Psoas muscle (tissue), 8 donors: ENCODE measurements at regions of chr19 and their contacts with region 1.

Region 1: DNA sequence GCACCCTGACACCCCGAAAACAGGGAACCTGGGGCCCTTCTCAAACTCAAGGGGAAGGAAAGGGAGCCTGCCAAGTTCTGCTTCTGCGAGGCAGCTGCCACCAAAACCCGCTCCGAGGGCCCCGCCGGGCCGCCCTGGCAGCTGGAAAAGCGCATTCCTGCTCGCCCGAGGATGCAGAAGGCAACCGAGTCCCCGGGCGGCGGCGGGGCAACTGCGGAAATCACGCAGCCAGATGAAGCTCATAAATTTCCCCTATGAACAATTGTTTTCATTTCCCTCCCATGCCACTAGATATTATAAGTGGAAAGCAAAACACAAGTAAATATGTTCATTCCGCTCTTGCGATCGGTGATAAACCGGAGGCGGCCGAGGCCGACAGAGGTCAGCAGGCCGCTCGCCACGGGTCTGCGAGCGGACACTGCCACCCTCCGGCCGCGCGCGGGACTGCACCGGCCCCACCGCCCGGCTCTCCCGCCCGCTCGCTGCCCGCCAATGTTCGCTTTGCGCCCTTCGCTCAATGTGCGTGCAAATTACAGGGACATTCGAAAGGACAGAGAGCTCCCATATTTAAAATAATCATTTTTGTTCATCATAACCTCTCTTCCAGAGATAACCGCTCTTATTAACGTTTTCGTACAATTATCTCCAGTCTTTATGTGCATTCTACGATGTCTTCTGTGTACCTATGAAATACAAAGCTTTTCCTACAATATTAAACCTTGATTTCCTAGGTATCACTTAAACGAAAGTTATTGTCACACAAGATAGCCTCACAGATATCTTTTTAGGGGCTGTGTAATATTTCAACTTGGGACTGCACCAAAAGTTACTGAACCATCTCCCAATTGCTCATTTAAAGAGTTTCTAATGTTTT is 120.8 kb upstream of the ZNF507 start:
- DNase-seq: peak; percentile 60 to 78
- ATAC-seq: peak; percentile 75 to 87 (median 78)
- H3K4me3 ChIP-seq: peak overlapping the region; percentile 38
- H3K27ac ChIP-seq: no peak overlapping the region
- H3K4me1 ChIP-seq: no peaks in the 10 kb centered on the region
- H3K27me3 ChIP-seq: peaks cover 0 to 18% (median 0%) of the 10 kb centered on the region in 3 donors
- CTCF ChIP-seq: peak; percentile 98

Region 2: DNA sequence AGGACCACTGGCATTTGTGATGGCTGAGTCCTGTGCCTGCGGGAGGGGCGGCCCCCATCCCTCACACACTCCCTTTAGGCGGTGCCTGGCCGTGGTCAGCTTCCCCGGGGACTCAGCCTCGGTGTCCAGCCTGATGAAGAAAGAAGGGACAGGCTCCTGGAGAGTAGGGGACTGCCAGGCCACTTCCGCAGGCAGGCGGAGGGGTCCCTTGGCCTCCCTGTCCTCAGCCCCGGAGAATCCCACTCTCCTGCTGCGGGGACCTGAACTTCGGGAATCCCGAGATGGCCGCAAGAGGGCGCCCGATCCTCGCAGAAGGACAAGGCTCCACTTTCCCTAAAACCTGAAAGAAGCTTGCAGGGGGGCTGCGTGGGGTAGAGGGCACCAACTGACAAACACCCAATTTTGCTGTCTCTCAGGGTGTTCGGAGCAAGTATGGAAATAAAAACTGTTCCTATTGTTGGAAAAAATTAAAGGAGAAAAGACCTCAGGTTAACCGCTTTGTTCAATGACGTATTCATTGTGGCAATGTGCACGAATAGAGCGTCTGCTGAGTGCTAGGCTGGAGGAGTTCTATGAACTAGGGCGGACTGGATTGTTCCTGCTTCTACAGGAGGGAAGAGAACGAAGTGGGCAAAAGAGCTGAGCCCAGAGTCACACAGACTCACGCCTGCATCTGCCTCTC is 1555.1 kb before region 1 on chr19:
- intact Hi-C with region 1: loop called (anchors 5 kb)
- DNase-seq: peak; percentile 59 to 75
- ATAC-seq: peak in 2 of 4 donors; percentile 26 to 41
- H3K4me3 ChIP-seq: no peak overlapping the region
- H3K27ac ChIP-seq: no peak overlapping the region
- H3K4me1 ChIP-seq: no peaks in the 10 kb centered on the region
- H3K27me3 ChIP-seq: peaks cover 0 to 24% (median 0%) of the 10 kb centered on the region in 3 donors
- CTCF ChIP-seq: peak; percentile 69

Region 3: DNA sequence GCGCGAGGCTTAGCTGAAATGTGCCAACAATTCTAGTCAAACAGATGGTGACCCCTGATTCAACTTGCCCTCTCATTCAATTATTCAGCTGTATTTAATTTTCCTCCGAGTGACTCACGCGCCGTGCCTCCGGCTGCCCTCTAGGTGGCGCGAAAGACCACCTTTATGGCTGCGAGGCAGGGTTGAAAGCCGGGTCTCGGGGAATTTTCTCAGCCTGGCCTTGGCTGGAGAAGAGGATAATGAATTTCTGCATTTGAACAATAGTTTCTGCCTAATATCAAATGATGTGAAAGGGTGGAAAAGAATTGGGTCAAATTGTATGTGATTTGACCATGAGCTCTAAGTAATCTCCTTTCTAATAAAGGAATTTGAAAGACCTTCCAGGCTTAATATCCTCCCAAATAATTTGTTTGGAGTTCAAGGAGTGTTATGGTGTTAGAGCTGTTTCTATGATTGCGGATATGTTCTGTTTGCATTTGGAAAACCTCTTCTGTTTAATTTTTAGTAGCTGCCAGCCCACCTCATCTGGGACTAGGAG is 1541.5 kb before region 1 on chr19:
- intact Hi-C with region 1: loop called (anchors 5 kb)
- DNase-seq: peak; percentile 71 to 82
- ATAC-seq: peak; percentile 63 to 82 (median 80)
- H3K4me3 ChIP-seq: no peak overlapping the region
- H3K27ac ChIP-seq: no peak overlapping the region
- H3K4me1 ChIP-seq: no peaks in the 10 kb centered on the region
- H3K27me3 ChIP-seq: peaks cover 0 to 23% (median 3%) of the 10 kb centered on the region in 3 donors
- CTCF ChIP-seq: peak; percentile 89

Region 4: GRCh38 chr19:30784850-30785457 is 1439.7 kb before region 1 on chr19:
- intact Hi-C with region 1: loop called (anchors 5 to 10 kb)
- DNase-seq: peak; percentile 48 to 61
- ATAC-seq: peak in 2 of 4 donors; percentile 50 to 54
- H3K4me3 ChIP-seq: no peak overlapping the region
- H3K27ac ChIP-seq: no peak overlapping the region
- H3K4me1 ChIP-seq: no peaks in the 10 kb centered on the region
- H3K27me3 ChIP-seq: no peaks in the 10 kb centered on the region
- CTCF ChIP-seq: peak; percentile 60